ENCODE measurements at regions of chr4 and their contacts with region 1.

Region 1: DNA sequence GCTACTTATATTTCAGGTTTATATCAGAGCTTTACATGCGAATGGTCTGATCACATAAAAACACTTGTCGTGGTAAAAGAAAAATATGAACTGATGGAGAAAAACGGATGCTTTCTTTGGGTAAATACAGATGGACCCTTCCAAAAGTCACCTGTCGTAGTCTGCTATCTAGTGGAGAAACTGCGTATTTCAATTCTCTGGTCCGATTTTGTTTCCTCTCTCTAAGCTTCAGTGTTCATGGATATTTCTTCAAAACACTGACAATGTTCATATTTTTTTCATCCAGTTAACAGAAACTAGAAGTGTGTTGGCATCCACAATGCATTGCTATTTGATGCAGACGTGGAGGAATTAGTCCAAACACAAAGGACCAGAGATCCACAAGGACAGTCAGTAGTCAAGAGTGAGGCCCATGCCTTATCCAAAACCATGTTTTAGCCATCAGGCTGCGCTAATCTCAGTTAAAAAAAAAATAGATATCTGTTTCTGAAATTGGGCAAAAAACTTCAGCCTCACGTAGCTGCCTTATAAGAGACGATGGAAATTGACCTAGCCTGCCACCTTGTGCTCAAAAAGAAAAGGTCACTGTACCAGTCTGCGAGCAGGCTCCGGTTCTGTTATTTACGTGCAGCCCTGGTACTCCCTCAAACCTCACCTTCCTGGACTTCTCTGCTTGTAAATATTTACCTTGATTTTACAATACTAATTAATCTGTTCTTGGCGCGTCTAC is 16.0 kb downstream of the MEPE start:
- DNase-seq: peak in 1 of 2 donors; percentile 80
- H3K4me3 ChIP-seq: peak overlapping the region; percentile 41 to 60
- H3K27ac ChIP-seq: peak overlapping the region; percentile 14 to 59
- H3K4me1 ChIP-seq: peaks cover 0 to 6% of the 10 kb centered on the region in 2 donors
- H3K27me3 ChIP-seq: no peaks in the 10 kb centered on the region
- CTCF ChIP-seq: peak; percentile 61 to 68 (median 63)

Region 2: DNA sequence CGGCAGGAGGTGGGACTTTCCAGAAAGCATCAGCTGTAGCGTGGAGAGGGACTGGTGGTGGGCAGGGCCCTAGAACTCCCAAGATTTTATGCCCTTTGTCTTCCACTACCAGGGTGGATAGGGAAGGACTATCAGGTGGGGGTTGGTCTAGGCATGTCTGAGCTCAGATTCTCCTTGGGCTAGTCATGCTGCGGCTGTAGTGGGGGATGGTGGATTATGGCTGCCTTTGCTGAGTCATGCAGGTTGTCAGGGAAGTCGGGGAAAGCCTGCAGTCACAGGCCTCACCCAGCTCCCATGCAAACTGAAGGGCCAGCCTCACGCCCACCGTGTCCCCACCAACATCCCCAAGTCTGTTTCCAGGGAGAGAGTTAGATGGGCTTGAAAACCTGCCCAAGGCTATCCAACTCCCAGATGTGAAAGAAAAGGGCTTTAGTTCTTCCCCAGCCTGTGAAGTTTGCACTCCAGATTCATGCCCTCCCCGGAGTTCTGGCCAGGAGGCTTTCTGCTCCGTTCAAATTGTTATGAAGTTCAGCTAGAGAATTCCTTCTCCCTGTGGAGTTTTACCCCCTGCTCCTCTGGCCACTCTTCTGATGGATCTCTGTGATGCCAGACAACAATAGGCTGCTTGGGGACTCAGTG is 29.4 kb before region 1 on chr4:
- intact Hi-C with region 1: no loop called
- DNase-seq: no peak
- H3K4me3 ChIP-seq: no peak overlapping the region
- H3K27ac ChIP-seq: no peak overlapping the region
- H3K4me1 ChIP-seq: no peaks in the 10 kb centered on the region
- H3K27me3 ChIP-seq: no peaks in the 10 kb centered on the region
- CTCF ChIP-seq: no peak

Region 3: DNA sequence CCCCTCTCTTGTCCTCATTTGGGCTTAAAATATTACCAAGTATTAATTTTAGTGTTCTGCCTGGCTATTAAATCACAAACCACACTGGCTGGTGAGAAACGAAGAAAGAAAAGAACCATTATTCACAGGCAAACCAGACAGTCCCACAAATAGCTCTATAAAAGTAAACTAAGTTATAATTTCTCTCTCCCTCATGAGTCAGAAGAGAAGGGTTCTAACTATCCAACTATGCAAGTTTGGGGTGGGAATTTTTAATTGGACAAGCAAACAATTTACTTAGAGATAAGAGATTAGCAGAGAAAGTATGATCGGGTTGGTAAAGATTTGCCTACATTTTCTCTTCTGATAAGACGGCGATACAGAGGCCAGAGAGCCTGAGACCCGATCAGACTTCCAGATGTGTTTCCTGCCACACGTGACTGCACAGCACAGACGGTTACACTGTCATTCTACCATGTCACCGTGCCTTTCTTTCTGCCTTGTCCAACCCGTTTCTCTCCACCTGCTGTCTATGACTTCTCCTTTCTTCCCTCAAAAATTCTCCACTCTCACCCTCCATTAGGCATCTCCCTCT is 36.3 kb after region 1 on chr4:
- intact Hi-C with region 1: no loop called
- DNase-seq: no peak
- H3K4me3 ChIP-seq: no peak overlapping the region
- H3K27ac ChIP-seq: peak overlapping the region in 1 of 2 donors; percentile 32
- H3K4me1 ChIP-seq: no peaks in the 10 kb centered on the region
- H3K27me3 ChIP-seq: no peaks in the 10 kb centered on the region
- CTCF ChIP-seq: no peak

Region 4: GRCh38 chr4:87895964-87896621 is 47.3 kb after region 1 on chr4:
- intact Hi-C with region 1: no loop called
- DNase-seq: peak; percentile 23 to 72
- H3K4me3 ChIP-seq: no peak overlapping the region
- H3K27ac ChIP-seq: no peak overlapping the region
- H3K4me1 ChIP-seq: no peaks in the 10 kb centered on the region
- H3K27me3 ChIP-seq: no peaks in the 10 kb centered on the region
- CTCF ChIP-seq: no peak

Region 5: GRCh38 chr4:87973283-87974169 is 124.7 kb after region 1 on chr4:
- intact Hi-C with region 1: loop called (anchors 1 kb)
- DNase-seq: peak in 1 of 2 donors; percentile 73
- H3K4me3 ChIP-seq: peak overlapping the region in 1 of 2 donors; percentile 18
- H3K27ac ChIP-seq: no peak overlapping the region
- H3K4me1 ChIP-seq: no peaks in the 10 kb centered on the region
- H3K27me3 ChIP-seq: no peaks in the 10 kb centered on the region
- CTCF ChIP-seq: peak; percentile 67 to 86 (median 73)

Measured in ascending aorta (tissue), 2 donors.